Endothelial cell of umbilical vein (primary cell): ENCODE measurements at regions of chr11 and their contacts with region 1.

Region 1: GRCh38 chr11:72030472-72031045 is 31.9 kb downstream of the IL18BP start:
- DNase-seq: no peak
- H3K4me3 ChIP-seq: no peak overlapping the region
- H3K27ac ChIP-seq: no peak overlapping the region
- H3K4me1 ChIP-seq: peaks cover 2% of the 10 kb centered on the region
- H3K27me3 ChIP-seq: no peaks in the 10 kb centered on the region
- CTCF ChIP-seq: no peak
- POLR2A ChIP-seq: no peak

Region 2: GRCh38 chr11:71787098-71787823 is 243.3 kb before region 1 on chr11:
- CTCF ChIA-PET with region 1: no interaction called
- POLR2A ChIA-PET with region 1: no interaction called
- dilution Hi-C with region 1: no loop called
- intact Hi-C with region 1: no loop called
- DNase-seq: peak; percentile 98
- H3K4me3 ChIP-seq: peak overlapping the region; percentile 27 to 67 (median 65)
- H3K27ac ChIP-seq: peak overlapping the region; percentile 73
- H3K4me1 ChIP-seq: peaks cover 3% of the 10 kb centered on the region
- H3K27me3 ChIP-seq: no peaks in the 10 kb centered on the region
- CTCF ChIP-seq: no peak
- POLR2A ChIP-seq: no peak

Region 3: DNA sequence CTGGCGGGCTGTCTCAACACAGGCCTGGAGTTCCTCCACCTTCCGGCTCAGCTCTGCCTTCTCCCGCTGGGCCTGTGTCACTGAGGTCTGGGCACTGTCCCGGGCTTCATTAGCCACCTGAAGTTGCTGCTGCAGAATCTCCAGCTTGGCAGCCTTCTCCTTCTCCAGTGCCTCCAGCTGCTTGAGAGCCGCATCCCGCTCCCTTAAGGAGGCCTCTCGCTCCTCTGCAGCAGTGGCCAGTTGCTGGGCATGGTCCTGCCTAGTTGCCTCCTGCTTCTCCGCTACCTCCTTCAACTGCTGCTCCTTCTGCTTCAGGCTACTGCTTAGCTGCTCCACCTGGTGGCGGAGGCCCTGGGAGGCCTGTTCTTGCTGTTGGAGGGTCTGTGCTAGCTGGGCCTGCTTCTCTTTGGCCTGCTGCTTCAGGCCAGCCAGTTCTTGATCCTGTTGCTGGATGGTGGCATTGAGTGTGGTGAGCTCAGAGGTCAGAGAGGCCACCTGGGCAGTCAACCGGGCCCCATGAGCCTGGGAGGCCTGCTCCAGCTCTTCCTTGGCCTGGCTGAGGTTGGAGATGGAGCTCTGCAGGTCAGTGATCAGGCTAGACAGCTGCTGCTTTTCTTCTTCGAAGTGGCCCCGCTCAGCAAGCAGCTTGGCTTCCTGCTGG is 14.9 kb before region 1 on chr11:
- CTCF ChIA-PET with region 1: interaction called, 43 read pairs
- POLR2A ChIA-PET with region 1: interaction called, 6 read pairs
- dilution Hi-C with region 1: no loop called
- intact Hi-C with region 1: no loop called
- DNase-seq: no peak
- H3K4me3 ChIP-seq: no peak overlapping the region
- H3K27ac ChIP-seq: no peak overlapping the region
- H3K4me1 ChIP-seq: no peaks in the 10 kb centered on the region
- H3K27me3 ChIP-seq: no peaks in the 10 kb centered on the region
- CTCF ChIP-seq: peak; percentile 24 to 57
- POLR2A ChIP-seq: no peak

Region 4: GRCh38 chr11:72069787-72070251 is 39.3 kb after region 1 on chr11:
- CTCF ChIA-PET with region 1: interaction called, 46 read pairs
- POLR2A ChIA-PET with region 1: no interaction called
- dilution Hi-C with region 1: no loop called
- intact Hi-C with region 1: no loop called
- DNase-seq: peak; percentile 81
- H3K4me3 ChIP-seq: peak overlapping the region in 1 of 3 experiments; percentile 1
- H3K27ac ChIP-seq: peak overlapping the region; percentile 50
- H3K4me1 ChIP-seq: peaks cover 64% of the 10 kb centered on the region
- H3K27me3 ChIP-seq: no peaks in the 10 kb centered on the region
- CTCF ChIP-seq: no peak
- POLR2A ChIP-seq: peak; percentile 64

Region 5: DNA sequence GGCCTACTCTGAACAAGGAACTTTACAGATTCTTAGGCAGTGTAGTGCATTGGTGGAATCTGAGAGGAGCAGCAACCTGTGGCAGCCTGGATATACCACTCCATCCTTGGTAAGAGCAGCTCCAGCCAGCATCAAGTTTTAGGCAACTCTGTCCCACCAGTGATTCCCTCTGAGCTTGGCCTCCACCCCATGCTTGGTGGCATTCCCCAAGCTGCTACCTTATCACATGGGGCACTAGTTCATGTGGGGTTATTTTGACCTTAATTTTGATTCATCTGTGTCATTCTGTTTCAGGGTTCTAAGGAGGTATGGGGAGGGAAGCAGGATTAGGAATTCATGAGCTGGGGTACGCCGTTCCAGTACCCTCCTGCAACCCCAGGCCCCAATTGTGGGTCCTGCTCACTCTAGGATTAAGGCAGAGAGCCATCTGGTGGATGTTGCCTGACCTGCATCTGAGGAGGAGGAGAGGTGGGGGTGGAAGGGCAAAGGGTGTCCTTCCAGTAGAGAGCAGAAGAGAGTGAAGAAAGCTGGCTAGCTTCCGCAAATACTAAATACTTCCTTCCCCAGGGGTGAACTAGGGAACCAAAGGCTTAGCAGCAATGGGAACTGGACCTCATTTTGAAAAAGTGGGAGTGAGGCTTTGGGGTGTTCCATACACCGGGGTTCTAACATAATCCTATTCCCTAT is 60.6 kb after region 1 on chr11:
- CTCF ChIA-PET with region 1: interaction called, 402 read pairs
- POLR2A ChIA-PET with region 1: interaction called, 3 read pairs
- dilution Hi-C with region 1: loop called (anchors 10 kb)
- intact Hi-C with region 1: loop called (anchors 1 kb)
- DNase-seq: peak; percentile 73
- H3K4me3 ChIP-seq: no peak overlapping the region
- H3K27ac ChIP-seq: no peak overlapping the region
- H3K4me1 ChIP-seq: peaks cover 3% of the 10 kb centered on the region
- H3K27me3 ChIP-seq: no peaks in the 10 kb centered on the region
- CTCF ChIP-seq: peak; percentile 84 to 87
- POLR2A ChIP-seq: no peak

Region 6: DNA sequence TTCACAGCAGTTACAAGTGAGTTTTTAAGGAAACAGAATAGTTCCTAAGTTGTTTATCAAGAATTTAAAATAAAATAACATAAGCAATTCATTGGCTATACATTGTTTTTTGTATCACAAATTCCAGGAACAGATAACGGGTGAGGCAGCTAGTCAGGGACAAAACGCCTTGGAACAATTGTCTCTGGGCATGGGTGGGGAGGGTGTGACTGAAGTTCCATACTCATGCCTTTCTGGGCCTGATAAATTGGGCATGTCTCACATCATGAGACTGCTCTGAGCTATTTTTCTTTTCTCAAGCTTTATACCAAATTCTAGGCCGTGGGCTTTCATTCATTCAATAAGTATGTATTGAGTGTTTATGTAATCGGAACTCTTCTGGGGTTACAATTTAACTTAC is 126.6 kb after region 1 on chr11:
- CTCF ChIA-PET with region 1: interaction called, 13 read pairs
- POLR2A ChIA-PET with region 1: no interaction called
- dilution Hi-C with region 1: no loop called
- intact Hi-C with region 1: no loop called
- DNase-seq: no peak
- H3K4me3 ChIP-seq: no peak overlapping the region
- H3K27ac ChIP-seq: no peak overlapping the region
- H3K4me1 ChIP-seq: no peaks in the 10 kb centered on the region
- H3K27me3 ChIP-seq: peaks cover 7 to 10% of the 10 kb centered on the region in 2 experiments
- CTCF ChIP-seq: no peak
- POLR2A ChIP-seq: no peak

Region 7: GRCh38 chr11:72222907-72223614 is 192.5 kb after region 1 on chr11:
- CTCF ChIA-PET with region 1: interaction called, 15 read pairs
- POLR2A ChIA-PET with region 1: no interaction called
- dilution Hi-C with region 1: no loop called
- intact Hi-C with region 1: loop called (anchors 1 kb)
- DNase-seq: peak; percentile 93
- H3K4me3 ChIP-seq: peak overlapping the region; percentile 62 to 94 (median 70)
- H3K27ac ChIP-seq: peak overlapping the region; percentile 60
- H3K4me1 ChIP-seq: peaks cover 9% of the 10 kb centered on the region
- H3K27me3 ChIP-seq: peaks cover 4 to 7% of the 10 kb centered on the region in 2 experiments
- CTCF ChIP-seq: peak in 1 of 2 donors; percentile 16
- POLR2A ChIP-seq: no peak

Region 8: GRCh38 chr11:72430741-72431570 is 400.4 kb after region 1 on chr11:
- CTCF ChIA-PET with region 1: interaction called, 66 read pairs
- POLR2A ChIA-PET with region 1: no interaction called
- dilution Hi-C with region 1: no loop called
- intact Hi-C with region 1: loop called (anchors 1 kb)
- DNase-seq: peak; percentile 52
- H3K4me3 ChIP-seq: no peak overlapping the region
- H3K27ac ChIP-seq: no peak overlapping the region
- H3K4me1 ChIP-seq: peaks cover 4% of the 10 kb centered on the region
- H3K27me3 ChIP-seq: no peaks in the 10 kb centered on the region
- CTCF ChIP-seq: peak; percentile 57 to 79
- POLR2A ChIP-seq: no peak